Activated CD8-positive, alpha-beta T cell treated with anti-CD3 and anti-CD28 coated beads for 36 hours (primary cell): ENCODE measurements at regions of chr13 and their contacts with region 1.

Region 1: DNA sequence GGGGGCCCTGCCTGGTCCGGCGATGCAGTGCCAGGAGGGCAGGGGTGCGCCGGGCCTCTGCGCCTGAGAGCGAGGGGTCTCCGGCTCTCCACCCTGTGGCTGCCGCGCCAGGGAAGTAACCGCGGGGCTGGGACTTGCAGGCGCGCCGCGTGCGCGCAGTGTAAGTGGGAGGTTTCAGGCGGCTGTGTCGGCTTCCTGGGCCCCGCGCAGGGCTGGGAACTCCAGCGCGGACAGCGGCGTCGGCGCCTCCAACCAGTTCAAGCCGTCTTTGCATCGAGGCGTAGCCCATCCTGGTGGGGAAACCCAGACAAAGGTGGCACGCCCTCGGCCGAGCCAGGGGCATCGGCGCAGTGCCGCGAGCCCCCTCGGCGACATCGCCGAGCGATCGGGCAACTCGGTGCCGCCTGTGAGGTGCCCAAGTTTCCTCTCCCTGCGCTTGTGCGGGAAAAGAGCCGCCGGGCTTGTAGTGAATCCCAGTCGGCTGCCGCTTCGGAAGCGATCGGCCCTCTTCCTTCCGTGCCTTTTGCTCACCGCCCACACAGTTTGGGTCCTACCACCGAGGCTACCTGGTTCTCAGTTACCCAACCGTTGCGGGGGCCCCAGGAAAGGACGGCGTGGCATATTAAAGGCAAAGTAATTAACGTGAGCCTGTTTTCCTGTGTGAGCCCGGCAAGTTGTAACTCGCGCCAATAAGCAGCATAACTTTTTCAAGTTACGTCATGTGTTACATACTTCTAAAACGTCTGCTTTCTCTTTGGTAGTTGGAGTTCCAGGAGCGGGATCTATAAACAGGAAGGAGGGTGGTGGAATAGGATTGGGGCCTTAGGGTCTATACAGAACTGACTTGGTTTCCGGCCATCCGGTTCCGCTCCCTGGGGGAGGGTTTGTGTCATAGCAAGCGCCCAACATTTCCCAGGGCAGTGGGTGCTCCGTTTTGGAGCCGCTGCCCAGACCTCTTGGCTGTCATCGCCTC is 1.2 kb downstream of the LRCH1 start:
- DNase-seq: peak; percentile 82
- ATAC-seq: peak; percentile 57
- H3K4me3 Mint-ChIP-seq: peak overlapping the region; percentile 90
- H3K27ac Mint-ChIP-seq: peak overlapping the region; percentile 91
- H3K4me1 Mint-ChIP-seq: peaks cover 48% of the 10 kb centered on the region
- H3K27me3 Mint-ChIP-seq: peaks cover 2% of the 10 kb centered on the region
- CTCF ChIP-seq: no peak

Region 2: GRCh38 chr13:46542833-46543232 is 11.3 kb before region 1 on chr13:
- CTCF ChIA-PET with region 1: interaction called, 19 read pairs
- POLR2A ChIA-PET with region 1: no interaction called
- intact Hi-C with region 1: no loop called
- DNase-seq: no peak
- ATAC-seq: peak; percentile 55
- H3K4me3 Mint-ChIP-seq: no peak overlapping the region
- H3K27ac Mint-ChIP-seq: no peak overlapping the region
- H3K4me1 Mint-ChIP-seq: peaks cover 4% of the 10 kb centered on the region
- H3K27me3 Mint-ChIP-seq: no peaks in the 10 kb centered on the region
- CTCF ChIP-seq: no peak

Region 3: DNA sequence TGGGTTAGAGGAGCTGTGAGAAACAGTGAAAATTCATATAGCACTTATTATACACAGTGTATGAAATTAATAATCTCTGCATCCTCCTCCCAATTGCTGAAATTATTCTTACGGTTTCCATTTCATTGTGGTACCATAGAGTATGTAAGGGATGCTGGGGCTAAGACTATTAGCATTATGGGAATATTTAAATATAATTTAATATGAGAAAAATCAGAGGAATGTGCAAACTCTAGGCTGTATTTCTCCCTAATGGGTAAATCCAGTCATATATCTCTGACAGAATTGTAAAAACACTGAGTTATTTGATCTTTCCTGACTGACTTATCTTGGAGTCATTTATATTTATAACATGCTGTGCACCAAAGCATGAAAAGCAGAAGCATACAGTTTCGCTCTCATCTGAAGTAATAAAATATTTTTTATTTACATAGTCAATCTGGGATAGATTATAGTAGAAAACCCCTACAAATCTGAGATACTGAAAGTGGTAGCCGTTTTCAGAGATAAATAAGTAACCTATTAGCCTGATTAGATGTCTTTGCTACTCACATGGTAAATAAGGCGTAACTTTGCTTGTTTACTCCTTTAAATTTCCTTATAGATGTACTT is 33.7 kb after region 1 on chr13:
- CTCF ChIA-PET with region 1: interaction called, 37 read pairs
- POLR2A ChIA-PET with region 1: no interaction called
- intact Hi-C with region 1: loop called (anchors 5 kb)
- DNase-seq: no peak
- ATAC-seq: no peak
- H3K4me3 Mint-ChIP-seq: no peak overlapping the region
- H3K27ac Mint-ChIP-seq: no peak overlapping the region
- H3K4me1 Mint-ChIP-seq: peaks cover 52% of the 10 kb centered on the region
- H3K27me3 Mint-ChIP-seq: no peaks in the 10 kb centered on the region
- CTCF ChIP-seq: no peak

Region 4: DNA sequence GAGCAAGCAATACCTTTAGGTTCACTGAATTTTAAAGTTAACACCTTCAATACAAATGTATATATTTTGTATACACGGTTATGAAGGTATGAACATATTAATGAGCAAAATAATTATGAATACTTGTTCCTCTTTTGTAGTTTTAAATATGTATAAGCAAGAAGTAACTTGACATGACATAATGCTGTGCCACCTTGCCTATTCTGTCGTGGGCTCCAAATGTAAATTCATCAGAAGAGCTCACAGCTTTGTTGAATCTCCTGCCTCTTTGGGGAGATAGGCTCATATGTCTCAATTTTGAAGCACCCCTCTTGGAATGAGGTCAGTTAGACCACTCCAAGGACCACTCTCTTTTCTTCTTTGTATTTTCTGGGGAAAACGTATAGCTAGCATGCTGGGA is 58.1 kb after region 1 on chr13:
- CTCF ChIA-PET with region 1: interaction called, 11 read pairs
- POLR2A ChIA-PET with region 1: no interaction called
- intact Hi-C with region 1: no loop called
- DNase-seq: no peak
- ATAC-seq: no peak
- H3K4me3 Mint-ChIP-seq: no peak overlapping the region
- H3K27ac Mint-ChIP-seq: no peak overlapping the region
- H3K4me1 Mint-ChIP-seq: peaks cover 39% of the 10 kb centered on the region
- H3K27me3 Mint-ChIP-seq: no peaks in the 10 kb centered on the region
- CTCF ChIP-seq: no peak

Region 5: DNA sequence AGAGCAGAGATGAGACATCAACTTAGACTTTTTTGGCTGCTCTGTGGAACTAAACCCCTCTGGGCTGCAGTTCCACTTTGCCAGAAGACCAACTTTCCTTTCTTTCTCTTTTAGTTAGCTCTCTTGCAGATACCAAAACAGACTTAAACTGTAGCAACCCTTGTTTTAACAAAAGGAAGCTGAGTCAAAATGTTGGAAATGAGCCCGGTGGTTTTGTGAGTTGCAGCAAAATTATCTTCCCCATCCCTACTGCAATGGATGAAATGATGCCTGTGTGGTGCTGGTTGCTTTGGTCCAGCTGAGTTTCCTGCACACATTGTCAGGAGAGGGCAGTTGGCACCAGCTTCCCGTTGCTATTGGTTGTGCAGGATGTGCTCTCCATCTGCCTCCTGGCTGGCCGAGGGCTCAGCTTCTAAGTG is 114.1 kb after region 1 on chr13:
- CTCF ChIA-PET with region 1: interaction called, 29 read pairs
- POLR2A ChIA-PET with region 1: interaction called, 3 read pairs
- intact Hi-C with region 1: no loop called
- DNase-seq: peak; percentile 33
- ATAC-seq: peak; percentile 40
- H3K4me3 Mint-ChIP-seq: peak overlapping the region; percentile 76
- H3K27ac Mint-ChIP-seq: peak overlapping the region; percentile 86
- H3K4me1 Mint-ChIP-seq: peaks cover 39% of the 10 kb centered on the region
- H3K27me3 Mint-ChIP-seq: no peaks in the 10 kb centered on the region
- CTCF ChIP-seq: no peak

Region 6: DNA sequence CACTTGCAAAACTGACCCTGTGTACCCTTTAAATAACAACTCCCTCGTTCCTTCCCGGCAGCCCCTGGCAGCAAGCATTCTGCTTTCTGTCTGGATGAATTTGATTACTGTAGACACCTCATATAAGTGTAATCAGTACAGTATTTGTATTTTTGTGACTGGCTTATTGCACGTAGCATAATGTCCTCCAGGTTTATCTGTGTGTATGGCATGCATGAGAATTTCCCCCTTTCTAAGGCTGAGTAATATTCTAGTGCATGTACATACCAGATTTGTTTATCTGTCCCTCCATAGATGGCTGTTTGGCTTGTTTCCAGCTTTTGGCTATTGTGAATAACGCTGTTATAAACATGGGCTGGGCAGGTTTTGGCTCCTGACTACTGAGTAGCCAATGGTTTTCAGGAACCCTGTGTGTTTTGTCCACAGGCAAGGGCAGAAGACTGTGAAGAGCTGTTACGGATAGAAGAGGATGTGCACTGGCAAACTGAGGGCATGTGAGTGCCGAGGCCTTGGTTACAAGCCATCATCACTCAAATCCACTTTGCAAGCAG is 144.8 kb after region 1 on chr13:
- CTCF ChIA-PET with region 1: interaction called, 30 read pairs
- POLR2A ChIA-PET with region 1: no interaction called
- intact Hi-C with region 1: no loop called
- DNase-seq: no peak
- ATAC-seq: no peak
- H3K4me3 Mint-ChIP-seq: no peak overlapping the region
- H3K27ac Mint-ChIP-seq: no peak overlapping the region
- H3K4me1 Mint-ChIP-seq: no peaks in the 10 kb centered on the region
- H3K27me3 Mint-ChIP-seq: no peaks in the 10 kb centered on the region
- CTCF ChIP-seq: no peak

Region 7: DNA sequence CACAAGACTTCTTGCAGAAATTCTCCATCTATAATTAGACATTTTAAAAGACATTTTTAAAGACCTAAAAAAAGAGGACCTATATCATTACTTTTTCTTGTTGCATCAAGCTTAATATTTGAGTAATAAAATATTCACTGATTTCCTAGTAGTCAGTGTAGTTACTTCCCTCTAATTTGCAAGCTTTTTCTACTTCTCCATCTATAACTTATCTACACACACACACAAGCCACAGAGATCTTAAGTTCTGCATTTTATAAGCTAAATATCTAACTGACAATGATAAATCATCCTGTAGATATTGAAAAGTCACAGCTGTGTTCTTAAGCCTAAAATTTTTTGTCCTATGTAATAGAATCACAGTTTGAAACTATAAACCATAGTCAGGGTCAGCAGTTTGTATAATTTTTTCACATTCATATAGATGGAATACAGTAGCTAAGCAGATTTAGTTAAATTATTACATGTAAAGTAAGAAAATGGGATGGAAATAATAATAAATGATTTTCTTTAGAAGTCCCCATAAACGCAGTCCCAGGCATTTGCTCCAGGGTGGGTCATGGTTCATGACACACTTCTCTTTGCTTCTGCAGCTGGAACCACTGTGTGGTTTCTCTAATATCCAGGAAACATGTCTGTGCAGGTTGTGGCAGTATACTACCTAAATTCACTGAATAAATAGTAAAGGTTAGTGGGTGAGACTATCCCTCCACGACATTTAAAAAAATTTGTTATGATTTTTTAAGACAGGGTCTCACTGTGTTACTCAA is 182.6 kb after region 1 on chr13:
- CTCF ChIA-PET with region 1: interaction called, 11 read pairs
- POLR2A ChIA-PET with region 1: no interaction called
- intact Hi-C with region 1: no loop called
- DNase-seq: no peak
- ATAC-seq: no peak
- H3K4me3 Mint-ChIP-seq: no peak overlapping the region
- H3K27ac Mint-ChIP-seq: no peak overlapping the region
- H3K4me1 Mint-ChIP-seq: no peaks in the 10 kb centered on the region
- H3K27me3 Mint-ChIP-seq: no peaks in the 10 kb centered on the region
- CTCF ChIP-seq: no peak